Activated CD8-positive, alpha-beta memory T cell treated with anti-CD3 and anti-CD28 coated beads, Interleukin-2, amount 10 ng/mL, durations not matched to agents 7 days and 5 days (primary cell): ENCODE measurements at regions of chr14 and their contacts with region 1.

Region 1: DNA sequence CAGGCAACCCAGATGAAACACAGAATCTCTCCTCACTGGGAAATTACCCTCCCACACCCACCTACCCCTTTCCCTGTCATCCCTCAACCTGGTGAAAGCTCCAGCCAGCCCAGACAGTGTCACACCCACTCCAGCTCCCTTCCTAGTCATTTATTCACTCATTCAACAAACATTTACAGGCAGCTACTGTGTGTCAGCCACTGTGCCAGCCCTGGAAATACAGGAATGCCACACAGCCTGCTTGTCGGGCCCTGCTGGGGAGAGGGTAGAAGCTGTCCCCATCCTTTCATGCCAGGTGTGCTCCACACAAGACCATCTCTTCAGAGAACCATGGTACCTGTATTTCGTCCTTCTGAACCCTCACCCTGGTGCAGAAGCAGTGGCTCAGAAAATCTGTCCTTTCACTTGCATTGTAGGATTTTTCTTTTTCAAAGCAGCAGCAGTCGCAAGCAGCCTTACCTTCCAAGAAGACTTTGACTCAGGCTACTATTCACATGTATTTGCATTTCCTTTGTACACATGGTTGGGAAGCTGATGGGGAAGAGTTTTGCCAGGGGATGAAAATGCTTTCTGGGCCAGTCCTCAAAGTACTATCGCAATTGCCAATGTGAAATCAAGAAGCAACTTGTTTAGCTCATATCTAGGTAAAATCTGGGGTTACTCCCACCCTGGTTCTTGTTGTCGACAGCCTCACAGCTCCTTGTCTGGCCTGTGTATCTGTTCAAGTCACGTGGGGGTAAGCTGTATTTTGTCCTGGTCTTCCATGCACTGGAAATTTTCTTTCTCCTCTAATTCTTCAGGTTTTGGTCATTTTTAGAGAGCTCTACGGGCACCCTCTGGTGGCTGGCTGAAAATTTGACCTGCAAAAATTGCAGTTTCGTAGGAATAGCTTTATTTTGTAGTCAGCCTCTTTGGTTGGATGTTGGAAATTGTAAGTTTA is 147.4 kb upstream of the EGLN3 start:
- DNase-seq: peak; percentile 43
- ATAC-seq: no peak
- H3K4me3 Mint-ChIP-seq: no peak overlapping the region
- H3K27ac Mint-ChIP-seq: no peak overlapping the region
- H3K4me1 Mint-ChIP-seq: peaks cover 18% of the 10 kb centered on the region
- H3K27me3 Mint-ChIP-seq: peaks cover 5% of the 10 kb centered on the region

Region 2: DNA sequence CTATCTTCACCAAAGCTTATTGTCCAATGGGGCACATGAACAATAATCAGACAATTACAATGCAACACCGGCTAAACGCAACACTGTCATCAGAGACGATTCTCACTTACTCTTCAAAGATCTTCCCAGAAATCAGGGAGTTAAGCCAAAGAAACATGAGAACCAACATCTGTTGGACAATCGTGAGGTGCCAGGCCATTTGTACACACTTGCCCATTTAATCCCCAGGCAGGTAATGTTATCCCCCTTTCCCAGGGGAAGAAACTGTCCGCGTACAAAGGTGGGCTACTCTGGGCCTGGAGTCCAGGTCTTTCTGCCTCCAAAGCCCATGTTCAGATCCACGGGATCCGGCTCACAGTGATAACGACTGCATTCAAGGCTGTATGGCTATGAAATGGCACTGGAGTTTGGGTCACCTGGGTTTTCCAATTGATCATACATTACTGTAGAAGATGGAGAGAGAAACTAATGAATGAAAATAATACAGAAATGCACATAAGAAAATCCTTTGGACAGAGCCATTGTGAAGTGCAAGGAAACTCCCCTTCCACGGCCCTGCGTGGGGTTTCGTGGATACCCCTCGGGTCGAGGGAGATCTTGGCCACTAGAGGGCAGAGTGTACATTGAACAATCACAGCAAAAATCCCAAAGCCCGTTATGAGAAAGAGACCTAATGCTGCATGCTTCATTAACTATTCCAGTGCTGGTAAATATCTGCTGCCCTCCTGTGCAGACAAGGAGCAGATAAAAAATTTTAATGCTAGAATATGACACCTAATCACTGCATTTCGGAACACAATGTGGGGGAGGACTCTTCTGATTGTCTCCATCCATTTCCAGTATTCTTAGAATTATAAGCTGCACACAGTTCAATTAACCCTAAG is 258.9 kb before region 1 on chr14:
- CTCF ChIA-PET with region 1: interaction called, 25 read pairs
- DNase-seq: peak; percentile 55
- ATAC-seq: peak; percentile 40
- H3K4me3 Mint-ChIP-seq: no peak overlapping the region
- H3K27ac Mint-ChIP-seq: no peak overlapping the region
- H3K4me1 Mint-ChIP-seq: peaks cover 41% of the 10 kb centered on the region
- H3K27me3 Mint-ChIP-seq: no peaks in the 10 kb centered on the region